ENCODE measurements at regions of chr15 and their contacts with region 1.

Region 1: DNA sequence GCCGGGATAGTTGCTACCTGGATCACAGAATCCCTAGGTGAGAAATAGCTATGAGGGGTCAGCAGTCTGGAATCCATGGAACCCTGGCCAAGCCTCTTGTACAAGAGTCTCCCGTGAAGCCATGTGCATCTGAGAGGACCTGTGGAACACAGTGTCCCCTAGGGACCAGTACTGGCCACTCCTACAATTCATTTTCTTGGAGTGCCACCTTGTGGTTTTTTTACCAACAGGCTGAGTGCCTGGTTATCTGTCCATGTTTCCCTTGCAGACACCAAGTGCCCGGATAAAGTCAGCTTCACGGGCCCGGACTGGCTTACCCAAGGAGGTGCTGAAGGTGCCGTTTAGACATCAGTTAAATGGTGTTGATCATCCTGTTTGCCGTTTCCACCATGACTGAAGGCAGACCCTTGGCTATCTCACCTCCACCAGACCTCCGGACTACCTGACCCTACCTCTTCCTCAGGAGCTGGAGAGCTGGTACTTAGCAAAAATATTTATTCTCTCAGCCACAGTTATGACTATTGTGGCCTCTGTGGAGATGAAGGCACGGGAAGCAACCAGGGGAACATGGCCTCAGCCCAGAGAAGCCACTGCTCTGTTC is 93.9 kb downstream of the RBPMS2 start:
- DNase-seq: peak; percentile 54 to 66 (median 62)
- H3K4me3 ChIP-seq: no peak overlapping the region
- H3K27ac ChIP-seq: no peak overlapping the region
- H3K4me1 ChIP-seq: no peaks in the 10 kb centered on the region
- H3K27me3 ChIP-seq: no peaks in the 10 kb centered on the region

Region 2: DNA sequence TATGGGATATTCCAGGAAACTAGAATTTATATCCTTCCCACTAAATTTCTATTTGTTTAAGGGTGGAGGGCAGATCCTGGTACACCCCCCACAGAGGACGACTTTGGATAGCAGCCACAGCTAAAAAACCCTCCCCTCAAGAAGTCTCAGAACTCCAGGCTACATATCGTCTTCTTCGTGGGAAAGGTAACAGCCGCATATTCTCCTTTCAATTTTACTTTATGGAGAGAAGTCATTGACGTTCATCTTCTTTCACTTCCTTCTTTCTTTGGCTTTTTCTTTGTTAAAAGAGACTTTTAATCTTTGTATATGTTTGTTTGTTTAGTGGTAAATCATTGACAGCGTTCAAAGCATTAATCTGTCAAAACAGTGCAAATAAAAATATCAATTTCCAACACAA is 257.6 kb before region 1 on chr15:
- CTCF ChIA-PET with region 1: interaction called, 41 read pairs
- POLR2A ChIA-PET with region 1: no interaction called
- DNase-seq: no peak
- H3K4me3 ChIP-seq: no peak overlapping the region
- H3K27ac ChIP-seq: no peak overlapping the region
- H3K4me1 ChIP-seq: peaks cover 6 to 19% (median 14%) of the 10 kb centered on the region in 4 experiments
- H3K27me3 ChIP-seq: no peaks in the 10 kb centered on the region

Region 3: DNA sequence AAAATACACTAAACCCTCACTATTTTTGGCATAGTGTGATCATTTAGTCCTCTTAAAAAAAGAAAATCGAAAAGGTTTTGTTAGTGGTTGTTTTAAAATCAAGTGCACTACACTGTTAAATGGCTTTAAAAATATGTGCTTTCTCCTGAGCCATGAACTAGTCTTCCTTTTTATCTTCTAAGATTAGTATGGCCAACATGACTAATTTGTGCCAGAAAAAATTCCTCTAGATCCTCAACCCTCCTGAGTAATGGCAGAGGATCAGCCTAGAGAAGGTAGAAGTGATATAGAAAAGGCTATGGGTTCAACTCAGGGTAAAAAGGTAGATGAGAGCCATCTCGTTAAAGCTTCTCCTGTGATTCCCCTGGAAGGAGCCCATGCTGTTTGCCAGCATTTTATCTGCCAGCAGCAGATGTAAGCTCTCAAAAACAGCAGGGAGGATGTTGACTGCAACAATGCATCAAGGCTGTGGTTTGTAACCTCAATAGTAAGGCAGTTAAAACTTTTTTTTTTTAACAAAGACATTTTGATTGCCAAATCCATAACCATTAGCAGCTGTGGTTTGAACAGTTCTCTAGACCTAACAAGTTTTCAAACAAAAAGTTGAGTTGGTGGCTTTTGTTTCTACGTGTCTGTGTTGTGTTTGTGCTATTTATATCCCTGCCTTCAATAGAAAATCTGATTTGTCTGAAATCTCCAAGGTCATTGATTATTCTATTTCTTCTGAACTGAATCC is 251.4 kb before region 1 on chr15:
- CTCF ChIA-PET with region 1: interaction called, 41 read pairs
- POLR2A ChIA-PET with region 1: no interaction called
- DNase-seq: peak; percentile 91 to 99 (median 97)
- H3K4me3 ChIP-seq: peak overlapping the region in 5 of 7 experiments; percentile 6 to 59 (median 42)
- H3K27ac ChIP-seq: peak overlapping the region; percentile 46 to 73
- H3K4me1 ChIP-seq: peaks cover 18 to 41% (median 37%) of the 10 kb centered on the region in 4 experiments
- H3K27me3 ChIP-seq: no peaks in the 10 kb centered on the region

Region 4: GRCh38 chr15:64460206-64460734 is 221.3 kb before region 1 on chr15 and contains the start of gene ZNF609:
- CTCF ChIA-PET with region 1: no interaction called
- POLR2A ChIA-PET with region 1: no interaction called
- DNase-seq: peak; percentile 86 to 91 (median 90)
- H3K4me3 ChIP-seq: peak within 1 kb of the TSS; percentile 45 to 89 (median 76)
- H3K27ac ChIP-seq: peak within 1 kb of the TSS; percentile 47 to 74
- H3K4me1 ChIP-seq: peaks cover 39 to 89% (median 82%) of the 10 kb centered on the region in 4 experiments
- H3K27me3 ChIP-seq: no peaks in the 10 kb centered on the region

Region 5: GRCh38 chr15:64693134-64693533 is 11.6 kb after region 1 on chr15:
- CTCF ChIA-PET with region 1: interaction called, 50 read pairs
- POLR2A ChIA-PET with region 1: no interaction called
- DNase-seq: peak in 2 of 3 donors; percentile 63 to 69
- H3K4me3 ChIP-seq: no peak overlapping the region
- H3K27ac ChIP-seq: peak overlapping the region in 1 of 2 experiments; percentile 49
- H3K4me1 ChIP-seq: peaks cover 27 to 72% (median 62%) of the 10 kb centered on the region in 4 experiments
- H3K27me3 ChIP-seq: no peaks in the 10 kb centered on the region

Region 6: GRCh38 chr15:64702816-64703646 is 21.5 kb after region 1 on chr15:
- CTCF ChIA-PET with region 1: interaction called, 50 read pairs
- POLR2A ChIA-PET with region 1: no interaction called
- DNase-seq: peak; percentile 87 to 92 (median 92)
- H3K4me3 ChIP-seq: peak overlapping the region; percentile 70 to 88 (median 85)
- H3K27ac ChIP-seq: peak overlapping the region; percentile 74 to 93
- H3K4me1 ChIP-seq: peaks cover 27 to 55% (median 45%) of the 10 kb centered on the region in 4 experiments
- H3K27me3 ChIP-seq: no peaks in the 10 kb centered on the region